BJ (cell line): ENCODE measurements at regions of chr14 and their contacts with region 1.

Region 1: DNA sequence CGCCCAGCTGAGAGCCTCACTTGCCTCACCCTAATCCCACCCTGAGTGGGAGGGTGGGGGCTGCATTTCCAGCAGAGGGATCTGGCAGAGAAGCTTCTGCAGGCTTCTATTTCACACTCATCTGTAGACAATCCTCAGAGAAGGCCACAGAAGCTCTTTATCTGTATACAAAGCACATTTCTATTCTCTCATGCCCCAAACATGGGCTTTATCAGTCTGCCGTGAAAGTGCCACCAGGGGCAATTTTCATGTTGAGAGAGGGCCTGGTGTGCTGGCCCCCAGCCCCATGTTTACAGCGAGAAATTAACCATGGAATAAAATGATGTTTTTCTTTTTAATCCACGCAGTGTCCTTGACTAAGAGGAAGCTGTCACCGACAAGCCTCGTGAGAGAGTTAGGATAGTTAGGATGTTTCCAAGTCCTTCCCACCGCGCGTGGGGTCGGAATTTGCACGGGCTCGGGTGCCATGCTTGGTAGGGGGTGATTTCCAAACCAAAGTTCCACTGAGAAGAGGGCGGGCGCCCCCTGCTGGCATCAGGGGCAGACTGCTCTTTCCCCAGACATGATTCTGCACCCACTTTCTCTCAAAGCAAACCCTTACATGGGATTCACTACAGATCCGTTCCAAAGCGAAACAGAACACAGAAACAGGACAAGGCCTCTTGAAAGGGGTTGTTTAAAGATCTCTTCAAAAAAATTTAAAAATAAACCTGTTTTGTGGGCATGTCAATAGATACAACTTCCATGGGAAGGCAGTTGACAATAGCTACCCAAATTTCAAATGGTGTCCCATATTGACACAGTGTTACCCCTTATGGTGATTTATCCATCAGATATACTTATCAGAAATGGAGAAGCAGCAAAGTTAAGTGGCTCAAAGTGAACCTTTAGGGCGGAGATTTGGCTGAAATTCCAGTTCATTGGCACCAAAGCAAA is 19.4 kb downstream of the BDKRB1 start:
- DNase-seq: no peak
- H3K4me3 ChIP-seq: no peak overlapping the region
- H3K27me3 ChIP-seq: no peaks in the 10 kb centered on the region
- CTCF ChIP-seq: peak; percentile 99

Region 2: DNA sequence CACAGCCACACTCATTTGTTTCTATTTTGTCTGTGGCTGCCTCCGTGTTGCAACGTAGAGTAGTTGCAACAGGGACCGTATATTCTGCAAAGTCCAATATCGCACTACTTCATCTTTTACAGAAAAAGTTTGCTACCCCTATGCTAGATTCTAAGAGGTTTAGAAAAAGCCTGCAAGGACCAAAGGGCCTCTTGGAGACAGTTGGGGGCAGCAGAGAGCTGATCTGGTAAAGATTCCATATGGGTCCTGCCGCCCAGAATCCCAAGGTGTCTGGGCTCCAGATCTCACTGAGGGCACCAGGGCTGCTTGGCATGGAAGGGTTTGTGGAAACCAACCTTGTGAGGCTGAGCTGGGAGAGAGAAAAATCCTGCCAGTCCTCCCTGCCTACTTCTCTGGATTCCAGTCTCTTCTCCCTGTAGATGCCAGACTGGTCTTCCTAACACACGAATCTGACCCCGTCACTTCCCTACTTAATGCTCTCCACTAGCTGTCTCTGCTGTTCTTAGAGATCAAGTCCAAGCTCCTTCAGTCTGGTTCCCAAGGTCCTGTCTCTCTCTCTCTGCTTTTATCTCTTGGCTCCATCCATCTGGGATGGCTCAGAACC is 666.0 kb before region 1 on chr14:
- CTCF ChIA-PET with region 1: no interaction called
- POLR2A ChIA-PET with region 1: no interaction called
- DNase-seq: no peak
- H3K4me3 ChIP-seq: no peak overlapping the region
- H3K27me3 ChIP-seq: peaks cover 2% of the 10 kb centered on the region
- CTCF ChIP-seq: peak; percentile 49

Region 3: GRCh38 chr14:96001866-96002497 is 273.5 kb before region 1 on chr14:
- CTCF ChIA-PET with region 1: interaction called, 23 read pairs
- POLR2A ChIA-PET with region 1: no interaction called
- DNase-seq: no peak
- H3K4me3 ChIP-seq: no peak overlapping the region
- H3K27me3 ChIP-seq: peaks cover 2% of the 10 kb centered on the region; the same call in 1 of the 2 replicates
- CTCF ChIP-seq: no peak

Region 4: GRCh38 chr14:96122496-96122895 is 152.9 kb before region 1 on chr14:
- CTCF ChIA-PET with region 1: interaction called, 18 read pairs
- POLR2A ChIA-PET with region 1: no interaction called
- DNase-seq: no peak
- H3K4me3 ChIP-seq: no peak overlapping the region
- H3K27me3 ChIP-seq: no peaks in the 10 kb centered on the region
- CTCF ChIP-seq: no peak

Region 5: DNA sequence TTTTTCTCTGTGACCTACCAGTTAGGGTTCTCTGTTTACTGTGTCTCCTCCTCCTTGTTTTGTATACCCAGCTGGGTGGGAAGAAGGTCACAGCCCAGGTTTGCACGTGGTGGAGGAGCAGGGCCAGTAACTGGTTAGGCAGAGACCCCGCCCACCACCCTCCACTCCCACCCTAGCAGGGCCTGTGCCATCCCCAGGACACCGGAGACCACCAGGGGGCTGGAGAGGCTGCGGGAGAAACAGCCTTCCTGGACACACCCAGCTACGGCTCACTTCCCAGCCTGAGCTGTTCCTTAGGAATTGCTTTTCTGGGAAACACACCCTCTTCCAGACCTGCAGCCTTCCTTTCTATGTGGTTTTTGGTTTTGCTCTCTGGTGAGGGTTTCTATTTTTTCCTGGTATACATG is 49.7 kb before region 1 on chr14:
- CTCF ChIA-PET with region 1: interaction called, 13 read pairs
- POLR2A ChIA-PET with region 1: no interaction called
- DNase-seq: peak; percentile 44
- H3K4me3 ChIP-seq: no peak overlapping the region
- H3K27me3 ChIP-seq: no peaks in the 10 kb centered on the region
- CTCF ChIP-seq: peak; percentile 65

Region 6: DNA sequence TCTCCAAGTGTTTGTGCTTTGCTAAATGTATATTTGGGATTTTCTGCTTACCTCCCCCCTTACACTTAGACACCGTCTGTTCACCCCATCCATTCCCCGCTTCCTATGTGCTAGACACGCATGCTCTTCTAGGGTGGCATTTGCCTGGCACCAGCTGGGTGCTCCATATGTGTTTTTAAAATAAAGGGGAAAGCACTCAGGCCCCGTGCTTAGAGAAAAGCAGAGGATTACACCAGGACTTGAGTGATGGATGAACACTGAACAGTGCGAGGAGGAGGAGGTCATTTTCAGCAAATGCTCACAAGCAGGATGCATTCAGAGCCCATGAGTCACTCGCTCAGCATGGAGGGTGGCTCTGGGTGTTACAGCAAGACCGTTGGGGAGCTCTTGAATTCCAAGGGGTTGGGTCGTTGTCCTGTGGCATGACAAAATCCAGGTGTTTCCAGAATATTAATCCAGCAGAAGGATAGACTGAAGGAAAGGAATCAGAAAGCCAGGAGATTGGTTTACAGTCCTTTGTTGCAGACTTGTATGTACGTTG is 22.4 kb before region 1 on chr14:
- CTCF ChIA-PET with region 1: interaction called, 25 read pairs
- POLR2A ChIA-PET with region 1: no interaction called
- DNase-seq: peak; percentile 51
- H3K4me3 ChIP-seq: no peak overlapping the region
- H3K27me3 ChIP-seq: no peaks in the 10 kb centered on the region
- CTCF ChIP-seq: no peak

Region 7: DNA sequence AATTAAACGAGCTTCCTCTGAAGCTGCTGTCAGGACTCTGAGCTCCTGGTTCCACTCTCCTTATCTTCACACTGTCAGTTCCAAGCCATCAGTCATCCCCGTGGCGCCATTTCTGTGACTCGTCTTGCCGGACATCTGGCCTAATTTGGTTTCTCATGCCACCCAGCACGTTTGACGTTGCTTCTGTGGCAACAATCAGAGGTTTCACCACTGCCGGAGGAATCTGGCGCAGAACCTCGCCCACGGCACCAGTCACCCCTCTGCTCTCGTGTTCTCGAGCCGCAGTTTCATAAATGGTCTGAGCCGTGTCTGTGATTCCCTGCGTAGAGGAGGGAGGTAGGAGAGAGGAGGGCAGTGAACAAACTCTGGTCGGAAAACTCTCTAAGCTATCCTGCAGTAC is 10.2 kb after region 1 on chr14:
- CTCF ChIA-PET with region 1: interaction called, 18 read pairs
- POLR2A ChIA-PET with region 1: no interaction called
- DNase-seq: no peak
- H3K4me3 ChIP-seq: no peak overlapping the region
- H3K27me3 ChIP-seq: no peaks in the 10 kb centered on the region
- CTCF ChIP-seq: no peak